Dendritic cell treated with granulocyte-macrophage colony-stimulating factor and Interleukin-4, amounts not matched to agents 40 ng/mL and 50 ng/mL, for 4 days (primary cell): ENCODE measurements at regions of chr14 and their contacts with region 1.

Region 1: DNA sequence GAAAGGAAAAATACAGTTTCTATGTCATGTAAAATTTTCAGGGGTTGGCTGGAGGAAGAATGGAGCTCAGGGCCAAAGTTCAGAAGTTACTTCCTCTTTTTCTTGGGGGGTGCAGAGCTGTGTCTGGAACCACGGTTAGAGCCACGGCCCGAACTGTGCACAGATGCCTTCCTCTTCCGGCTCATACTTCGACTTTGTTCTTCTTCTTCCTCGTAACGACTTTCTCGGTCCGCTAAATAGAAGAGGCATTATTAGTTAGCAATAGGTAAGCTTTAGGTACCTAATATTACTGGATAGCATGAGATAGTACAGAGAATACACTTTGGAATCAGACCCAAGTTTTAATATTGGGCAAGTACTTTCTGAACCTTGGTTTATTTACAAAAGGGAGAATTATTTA is 31.2 kb downstream of the SUPT16H start:
- H3K4me3 Mint-ChIP-seq: peak overlapping the region; percentile 7
- H3K27ac Mint-ChIP-seq: peak overlapping the region; percentile 86
- H3K4me1 Mint-ChIP-seq: peaks cover 26% of the 10 kb centered on the region
- H3K27me3 Mint-ChIP-seq: peaks cover 2% of the 10 kb centered on the region

Region 2: DNA sequence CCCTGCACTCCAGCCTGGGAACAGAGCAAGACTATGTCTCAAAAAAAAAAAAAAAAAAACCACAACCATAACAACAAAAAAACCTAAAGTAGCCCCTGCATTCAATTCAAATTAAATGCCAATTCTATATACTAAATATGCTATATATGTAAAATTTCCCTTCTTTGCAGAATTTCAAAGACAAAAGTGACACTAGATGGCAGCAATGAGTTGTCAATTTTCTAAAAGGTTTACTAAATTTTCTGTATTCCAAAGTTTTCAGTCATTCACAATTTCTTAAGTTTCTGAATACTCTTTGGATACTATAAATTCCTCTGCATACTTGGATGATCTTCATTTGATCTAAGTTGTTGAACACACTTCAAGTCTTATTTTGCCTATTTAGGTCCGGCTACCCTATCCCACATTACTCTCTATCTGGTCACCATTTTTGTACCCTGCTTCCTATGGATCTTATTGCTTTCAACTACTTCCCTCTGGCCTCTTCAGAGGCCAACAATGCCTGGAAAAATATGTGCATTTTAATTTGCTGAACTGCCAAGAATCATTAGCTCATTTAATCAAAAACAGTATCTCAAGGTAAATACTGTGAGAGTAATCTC is 111.3 kb before region 1 on chr14:
- intact Hi-C with region 1: loop called (anchors 5 kb)
- H3K4me3 Mint-ChIP-seq: no peak overlapping the region
- H3K27ac Mint-ChIP-seq: no peak overlapping the region
- H3K4me1 Mint-ChIP-seq: peaks cover 48% of the 10 kb centered on the region
- H3K27me3 Mint-ChIP-seq: no peaks in the 10 kb centered on the region

Region 3: DNA sequence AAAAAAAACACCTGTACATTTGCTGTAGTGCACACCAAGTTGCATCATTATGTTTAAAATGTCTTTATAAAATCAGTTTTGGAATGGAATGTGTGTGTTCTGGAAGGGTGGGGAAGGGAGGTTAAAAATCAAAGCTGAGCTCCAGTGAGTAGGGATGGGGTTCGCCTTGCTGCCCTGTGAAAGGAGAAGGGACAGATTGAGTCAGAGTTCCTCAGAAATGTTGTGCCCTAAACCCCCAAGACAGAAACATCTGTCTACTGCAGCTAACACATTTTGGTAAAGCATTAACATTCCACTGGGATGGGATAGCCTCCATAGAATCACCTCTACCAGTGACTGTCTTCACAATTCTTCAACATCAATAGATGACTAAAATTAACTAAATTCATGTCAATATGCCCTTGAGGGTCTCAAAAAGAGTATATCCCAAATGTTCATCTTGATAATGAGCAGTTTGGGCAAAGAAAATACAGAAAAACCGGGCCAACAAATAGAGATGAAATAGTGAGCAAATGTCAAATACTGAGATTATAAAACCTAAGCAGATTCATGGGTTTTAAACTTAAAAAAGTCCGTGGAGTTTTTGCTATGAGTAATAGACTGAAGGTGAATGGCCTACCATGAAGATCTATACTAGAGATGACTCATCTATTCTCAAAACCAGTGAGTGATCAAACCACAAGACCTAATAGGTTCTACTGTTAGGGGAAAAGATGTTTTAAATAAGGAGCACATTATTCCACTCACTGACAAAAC is 88.8 kb before region 1 on chr14:
- intact Hi-C with region 1: loop called (anchors 5 kb)
- H3K4me3 Mint-ChIP-seq: peak overlapping the region; percentile 47
- H3K27ac Mint-ChIP-seq: peak overlapping the region; percentile 98
- H3K4me1 Mint-ChIP-seq: peaks cover 62% of the 10 kb centered on the region
- H3K27me3 Mint-ChIP-seq: no peaks in the 10 kb centered on the region

Region 4: DNA sequence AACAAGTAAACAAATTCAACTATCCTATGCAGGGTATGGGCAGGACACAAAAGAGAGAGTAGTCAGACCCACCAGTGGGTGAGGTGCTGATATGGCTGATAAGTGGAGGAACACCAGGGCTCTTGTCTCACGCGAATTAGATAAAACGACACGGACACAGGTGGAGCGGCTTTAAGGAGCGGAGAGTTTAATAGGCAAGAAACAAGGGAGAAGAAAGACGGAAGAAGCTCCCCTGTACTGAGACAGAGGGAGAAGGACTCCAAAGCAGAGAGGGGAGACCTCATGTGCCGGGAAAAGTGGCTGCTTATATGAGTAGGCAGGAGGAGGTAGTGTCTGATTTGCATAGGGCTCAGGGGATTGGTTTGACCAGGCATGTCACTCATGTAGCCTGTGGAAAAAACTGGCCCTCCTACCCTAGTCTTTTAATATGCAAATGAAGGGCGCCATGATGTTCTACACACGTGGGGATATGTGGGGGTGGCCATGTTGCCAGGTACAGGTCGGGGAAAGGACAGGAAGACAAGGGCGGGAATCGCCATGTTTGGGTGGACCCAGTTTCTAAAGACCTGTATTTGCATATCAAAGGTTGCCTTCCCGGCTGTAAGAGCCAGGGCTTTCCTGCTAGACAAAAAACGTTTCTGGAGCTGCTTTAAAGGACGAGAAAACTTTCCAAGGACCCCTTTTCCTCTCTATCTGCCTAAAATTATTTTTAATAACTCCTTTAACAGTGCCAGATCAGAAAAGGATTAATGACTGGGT is 43.9 kb before region 1 on chr14:
- intact Hi-C with region 1: loop called (anchors 5 kb)
- H3K4me3 Mint-ChIP-seq: peak overlapping the region; percentile 75
- H3K27ac Mint-ChIP-seq: peak overlapping the region; percentile 77
- H3K4me1 Mint-ChIP-seq: peaks cover 28% of the 10 kb centered on the region
- H3K27me3 Mint-ChIP-seq: peaks cover 3% of the 10 kb centered on the region